ENCODE measurements at regions of chrX and their contacts with region 1.

Region 1: DNA sequence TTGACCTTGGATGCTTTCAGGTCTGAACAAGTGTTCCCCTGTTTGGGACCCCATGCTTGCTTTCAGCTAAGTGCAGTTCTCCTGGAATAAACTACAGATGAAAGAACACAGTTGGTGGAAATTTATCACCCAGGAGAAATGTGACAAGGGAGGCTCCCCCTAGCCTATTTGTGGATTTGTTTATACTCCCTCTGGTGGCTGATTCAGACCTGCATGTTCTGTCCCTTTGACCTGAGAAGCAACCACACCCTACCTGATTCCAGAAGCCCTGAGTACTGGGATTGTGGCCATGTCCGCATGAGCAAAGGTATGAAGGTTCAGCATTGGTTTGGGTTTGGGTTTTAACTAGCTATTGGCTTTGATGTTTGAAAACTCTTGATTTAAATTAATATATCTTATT is 440.9 kb downstream of the MID1IP1 start:
- DNase-seq: peak in 6 of 9 donors; percentile 7 to 31 (median 16)
- ATAC-seq: no peak
- H3K4me3 ChIP-seq: no peak overlapping the region
- H3K4me3 Mint-ChIP-seq: no peak overlapping the region
- H3K27ac ChIP-seq: no peak overlapping the region
- H3K27ac Mint-ChIP-seq: no peak overlapping the region
- H3K4me1 ChIP-seq: no peaks in the 10 kb centered on the region
- H3K4me1 Mint-ChIP-seq: peaks cover 0 to 14% (median 0%) of the 10 kb centered on the region in 7 donors
- H3K27me3 ChIP-seq: no peaks in the 10 kb centered on the region
- H3K27me3 Mint-ChIP-seq: no peaks in the 10 kb centered on the region

Region 2: GRCh38 chrX:38664285-38664684 is 577.9 kb before region 1 on chrX:
- CTCF ChIA-PET with region 1: no interaction called
- POLR2A ChIA-PET with region 1: no interaction called
- intact Hi-C with region 1: loop called in 1 of 2 experiments (anchors 2 kb)
- DNase-seq: peak in 1 of 9 donors; percentile 1
- ATAC-seq: no peak
- H3K4me3 ChIP-seq: no peak overlapping the region
- H3K4me3 Mint-ChIP-seq: no peak overlapping the region
- H3K27ac ChIP-seq: no peak overlapping the region
- H3K27ac Mint-ChIP-seq: no peak overlapping the region
- H3K4me1 ChIP-seq: no peaks in the 10 kb centered on the region
- H3K4me1 Mint-ChIP-seq: peaks cover 0 to under 1% (median under 1%) of the 10 kb centered on the region in 7 donors
- H3K27me3 ChIP-seq: no peaks in the 10 kb centered on the region
- H3K27me3 Mint-ChIP-seq: no peaks in the 10 kb centered on the region

Region 3: DNA sequence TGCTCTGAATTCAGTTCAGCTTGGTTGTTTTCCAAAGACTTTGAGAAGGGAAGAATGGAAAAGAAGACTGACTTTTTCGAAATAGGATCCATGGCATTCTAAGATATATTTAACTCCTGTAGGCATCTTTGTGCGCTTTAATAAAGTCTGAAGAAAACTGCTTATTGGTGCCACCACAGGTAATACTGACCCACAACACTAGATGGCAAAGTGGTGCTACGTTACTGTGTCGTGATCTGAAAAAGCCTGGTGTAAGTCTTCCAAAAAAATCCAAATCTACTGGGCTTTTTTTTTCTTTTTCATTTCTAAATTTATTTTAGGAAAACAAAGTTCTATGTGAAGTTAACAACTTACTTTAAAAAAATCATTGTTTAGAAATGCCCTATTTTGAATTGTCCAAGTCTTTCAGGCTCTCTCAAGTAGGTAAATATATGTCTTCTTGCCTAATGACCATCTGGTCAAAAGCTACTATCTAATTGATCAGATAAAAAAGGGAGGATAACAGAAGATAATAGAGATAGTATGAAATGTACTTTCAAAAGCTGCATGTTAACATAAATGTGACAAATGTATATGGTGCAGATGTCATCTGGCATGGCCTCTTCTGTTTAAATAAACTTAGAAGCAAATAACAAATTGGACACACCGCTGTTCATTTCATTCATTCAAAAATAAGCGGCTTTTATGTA is 487.9 kb before region 1 on chrX:
- CTCF ChIA-PET with region 1: interaction called, 4 read pairs
- POLR2A ChIA-PET with region 1: no interaction called
- intact Hi-C with region 1: loop called in 1 of 2 experiments (anchors 1 kb)
- DNase-seq: peak in 6 of 9 donors; percentile 1 to 40 (median 32)
- ATAC-seq: peak; percentile 65
- H3K4me3 ChIP-seq: no peak overlapping the region
- H3K4me3 Mint-ChIP-seq: no peak overlapping the region
- H3K27ac ChIP-seq: no peak overlapping the region
- H3K27ac Mint-ChIP-seq: no peak overlapping the region
- H3K4me1 ChIP-seq: no peaks in the 10 kb centered on the region
- H3K4me1 Mint-ChIP-seq: no peaks in the 10 kb centered on the region
- H3K27me3 ChIP-seq: no peaks in the 10 kb centered on the region
- H3K27me3 Mint-ChIP-seq: no peaks in the 10 kb centered on the region

Region 4: GRCh38 chrX:38768079-38768478 is 474.1 kb before region 1 on chrX:
- CTCF ChIA-PET with region 1: interaction called, 4 read pairs
- POLR2A ChIA-PET with region 1: no interaction called
- intact Hi-C with region 1: loop called in 1 of 2 experiments (anchors 5 kb)
- DNase-seq: peak in 5 of 9 donors; percentile 8 to 40 (median 19)
- ATAC-seq: no peak
- H3K4me3 ChIP-seq: no peak overlapping the region
- H3K4me3 Mint-ChIP-seq: no peak overlapping the region
- H3K27ac ChIP-seq: no peak overlapping the region
- H3K27ac Mint-ChIP-seq: no peak overlapping the region
- H3K4me1 ChIP-seq: no peaks in the 10 kb centered on the region
- H3K4me1 Mint-ChIP-seq: no peaks in the 10 kb centered on the region
- H3K27me3 ChIP-seq: no peaks in the 10 kb centered on the region
- H3K27me3 Mint-ChIP-seq: peaks cover 0 to 4% (median 0%) of the 10 kb centered on the region in 5 donors

Region 5: GRCh38 chrX:38831949-38832348 is 410.2 kb before region 1 on chrX:
- CTCF ChIA-PET with region 1: no interaction called
- POLR2A ChIA-PET with region 1: no interaction called
- intact Hi-C with region 1: no loop called
- DNase-seq: no peak
- ATAC-seq: no peak
- H3K4me3 ChIP-seq: no peak overlapping the region
- H3K4me3 Mint-ChIP-seq: no peak overlapping the region
- H3K27ac ChIP-seq: no peak overlapping the region
- H3K27ac Mint-ChIP-seq: no peak overlapping the region
- H3K4me1 ChIP-seq: no peaks in the 10 kb centered on the region
- H3K4me1 Mint-ChIP-seq: peaks cover 0 to 12% (median 7%) of the 10 kb centered on the region in 7 donors
- H3K27me3 ChIP-seq: no peaks in the 10 kb centered on the region
- H3K27me3 Mint-ChIP-seq: no peaks in the 10 kb centered on the region

Region 6: GRCh38 chrX:39162322-39162735 is 79.9 kb before region 1 on chrX:
- CTCF ChIA-PET with region 1: interaction called, 5 read pairs
- POLR2A ChIA-PET with region 1: no interaction called
- intact Hi-C with region 1: loop called (anchors 1 to 5 kb)
- DNase-seq: peak in 8 of 9 donors; percentile 17 to 47 (median 35)
- ATAC-seq: peak; percentile 83
- H3K4me3 ChIP-seq: no peak overlapping the region
- H3K4me3 Mint-ChIP-seq: peak overlapping the region; percentile 35 to 84 (median 77)
- H3K27ac ChIP-seq: no peak overlapping the region
- H3K27ac Mint-ChIP-seq: peak overlapping the region in 2 of 9 donors; percentile 50 to 81
- H3K4me1 ChIP-seq: no peaks in the 10 kb centered on the region
- H3K4me1 Mint-ChIP-seq: peaks cover 0 to 20% (median 10%) of the 10 kb centered on the region in 7 donors
- H3K27me3 ChIP-seq: no peaks in the 10 kb centered on the region
- H3K27me3 Mint-ChIP-seq: peaks cover 0 to 11% (median 5%) of the 10 kb centered on the region in 5 donors

Region 7: GRCh38 chrX:39195156-39195555 is 47.0 kb before region 1 on chrX:
- CTCF ChIA-PET with region 1: no interaction called
- POLR2A ChIA-PET with region 1: no interaction called
- intact Hi-C with region 1: no loop called
- DNase-seq: no peak
- ATAC-seq: no peak
- H3K4me3 ChIP-seq: no peak overlapping the region
- H3K4me3 Mint-ChIP-seq: peak overlapping the region in 9 of 10 donors; percentile 11 to 76 (median 56)
- H3K27ac ChIP-seq: no peak overlapping the region
- H3K27ac Mint-ChIP-seq: peak overlapping the region in 1 of 9 donors; percentile 71
- H3K4me1 ChIP-seq: peaks cover 14 to 18% of the 10 kb centered on the region in 2 donors
- H3K4me1 Mint-ChIP-seq: peaks cover 7 to 44% (median 20%) of the 10 kb centered on the region in 7 donors
- H3K27me3 ChIP-seq: no peaks in the 10 kb centered on the region
- H3K27me3 Mint-ChIP-seq: no peaks in the 10 kb centered on the region

Measured in naive thymus-derived CD4-positive, alpha-beta T cell (primary cell).